BJ (cell line): ENCODE measurements at regions of chr20 and their contacts with region 1.

Region 1: GRCh38 chr20:35702824-35703695 is 3.9 kb downstream of the ROMO1 start:
- DNase-seq: no peak
- H3K4me3 ChIP-seq: no peak overlapping the region
- H3K27me3 ChIP-seq: no peaks in the 10 kb centered on the region
- CTCF ChIP-seq: no peak

Region 2: GRCh38 chr20:35718972-35719635 is 16.0 kb after region 1 on chr20:
- CTCF ChIA-PET with region 1: interaction called, 4 read pairs
- POLR2A ChIA-PET with region 1: interaction called, 12 read pairs
- DNase-seq: no peak
- H3K4me3 ChIP-seq: no peak overlapping the region
- H3K27me3 ChIP-seq: no peaks in the 10 kb centered on the region
- CTCF ChIP-seq: no peak